Adrenal gland (tissue), 19 donors: ENCODE measurements at regions of chr3 and their contacts with region 1.

Region 1: DNA sequence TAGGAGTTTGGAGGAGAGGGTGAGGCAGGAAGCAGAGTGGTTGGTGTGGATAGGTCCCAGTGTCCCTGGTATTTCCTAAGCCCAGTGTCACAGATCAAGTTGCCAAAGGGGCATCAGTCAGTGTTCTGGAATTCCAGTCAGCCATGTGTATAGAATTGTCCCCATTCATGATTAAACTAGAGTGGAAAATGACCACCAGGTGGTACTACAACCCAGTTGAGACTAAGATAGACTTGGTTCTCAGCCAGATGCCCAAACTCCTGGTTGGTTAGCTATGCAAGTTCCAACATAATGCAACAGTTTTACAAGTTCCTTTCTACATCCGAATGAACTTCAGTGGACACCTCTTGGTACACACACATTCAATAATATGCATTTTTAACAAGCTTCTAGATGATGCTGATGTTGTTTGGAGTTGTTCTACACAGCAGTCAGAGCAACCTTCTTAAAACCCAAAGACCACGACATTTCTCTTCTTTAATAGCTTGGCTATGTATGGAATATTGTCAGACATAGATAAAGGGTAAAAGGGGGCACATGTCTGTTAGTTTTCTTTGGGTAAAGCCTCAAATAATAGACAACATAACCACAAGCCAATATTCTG is 8.4 kb upstream of the ATR start:
- DNase-seq: peak in 6 of 7 donors; percentile 25 to 65 (median 42)
- H3K4me3 ChIP-seq: no peak overlapping the region
- H3K27ac ChIP-seq: no peak overlapping the region
- H3K4me1 ChIP-seq: no peaks in the 10 kb centered on the region
- H3K27me3 ChIP-seq: no peaks in the 10 kb centered on the region
- CTCF ChIP-seq: peak; percentile 38 to 72 (median 67)
- POLR2A ChIP-seq: no peak

Region 2: GRCh38 chr3:142746646-142747045 is 159.7 kb after region 1 on chr3:
- intact Hi-C with region 1: no loop called
- DNase-seq: no peak
- H3K4me3 ChIP-seq: no peak overlapping the region
- H3K27ac ChIP-seq: no peak overlapping the region
- H3K4me1 ChIP-seq: no peaks in the 10 kb centered on the region
- H3K27me3 ChIP-seq: no peaks in the 10 kb centered on the region
- CTCF ChIP-seq: no peak
- POLR2A ChIP-seq: no peak

Region 3: DNA sequence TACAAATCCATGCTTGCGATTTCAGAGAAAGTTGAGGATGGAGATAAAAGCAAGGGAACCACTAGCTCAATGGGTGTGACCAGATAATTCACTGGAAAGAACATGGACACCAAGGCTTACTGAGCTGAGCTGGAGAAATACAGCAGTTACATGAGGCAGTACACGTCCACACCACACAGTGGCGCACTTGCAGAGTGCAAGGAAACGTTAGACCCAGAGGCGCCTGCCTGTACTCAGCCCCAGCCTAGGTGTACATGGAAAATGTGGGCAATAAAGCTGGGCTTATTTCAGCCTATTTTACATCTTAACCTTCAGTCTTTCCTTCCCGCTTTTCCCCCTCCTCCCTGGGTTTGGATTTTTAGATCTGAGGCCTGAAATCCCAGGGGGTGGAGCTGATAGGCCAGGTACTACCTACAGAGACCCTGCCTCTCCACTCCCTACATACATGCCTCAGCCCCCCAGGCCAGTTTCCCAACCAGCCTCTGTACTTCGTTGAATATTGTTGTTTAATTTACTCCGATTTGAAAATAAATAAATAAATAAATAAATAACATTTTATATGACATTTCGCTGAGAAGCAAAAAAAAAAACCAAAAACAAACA is 241.9 kb after region 1 on chr3:
- intact Hi-C with region 1: loop called in 1 of 2 experiments (anchors 10 kb)
- DNase-seq: peak; percentile 73 to 94 (median 87)
- H3K4me3 ChIP-seq: no peak overlapping the region
- H3K27ac ChIP-seq: no peak overlapping the region
- H3K4me1 ChIP-seq: no peaks in the 10 kb centered on the region
- H3K27me3 ChIP-seq: no peaks in the 10 kb centered on the region
- CTCF ChIP-seq: peak; percentile 78 to 91 (median 87)
- POLR2A ChIP-seq: no peak

Region 4: DNA sequence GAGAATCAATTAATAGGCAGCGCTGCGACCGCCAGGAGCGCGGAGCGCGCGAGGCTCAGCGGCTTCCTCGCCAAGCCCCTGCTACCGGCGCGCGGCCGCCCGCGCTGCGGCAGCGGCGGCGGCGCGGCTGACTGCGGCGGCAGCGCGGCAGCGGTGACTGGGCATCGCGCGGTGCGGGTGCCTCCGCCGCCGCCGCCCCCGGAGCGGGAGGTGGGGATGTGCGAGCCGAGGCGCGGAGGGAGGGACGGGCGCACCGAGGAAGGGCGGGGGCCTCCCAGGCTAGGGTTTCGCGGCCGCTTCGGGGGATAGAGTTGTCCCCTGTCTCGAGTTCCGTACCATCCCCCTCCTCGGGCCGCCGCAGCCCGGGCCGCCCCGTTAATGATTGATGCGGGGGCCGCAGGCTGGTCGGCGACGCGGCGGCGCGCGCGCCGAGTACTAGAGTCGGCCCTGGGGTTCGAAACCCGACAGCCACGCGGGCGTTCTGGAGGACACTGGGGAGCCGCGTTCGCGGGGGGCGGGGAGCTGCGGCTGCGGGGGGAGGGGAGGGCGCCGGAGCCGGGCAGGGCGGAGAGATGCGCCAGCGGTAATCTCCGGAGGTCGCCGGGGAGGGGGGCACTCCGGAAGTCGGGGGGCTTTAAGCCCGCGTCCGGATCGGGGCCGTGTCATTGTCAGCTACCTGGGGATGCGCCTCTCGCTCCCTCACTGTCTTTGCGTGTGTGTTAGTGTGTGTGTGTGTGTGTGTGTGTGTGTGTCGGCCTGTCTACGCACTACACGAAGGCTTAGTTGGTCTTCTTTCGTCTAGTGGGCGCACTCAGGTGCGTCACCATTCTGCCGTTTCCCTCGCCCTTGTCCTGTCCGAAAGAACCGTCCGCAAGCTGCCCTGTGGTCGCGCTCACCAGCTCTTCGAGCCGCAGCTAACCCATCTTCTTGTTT is 376.9 kb after region 1 on chr3 and contains the start of gene PAQR9:
- intact Hi-C with region 1: no loop called
- DNase-seq: peak in 2 of 7 donors; percentile 18 to 32
- H3K4me3 ChIP-seq: peak within 1 kb of the TSS in 2 of 4 donors; percentile 11 to 56
- H3K27ac ChIP-seq: no peak within 1 kb of the TSS
- H3K4me1 ChIP-seq: no peaks in the 10 kb centered on the region
- H3K27me3 ChIP-seq: peaks cover 19% of the 10 kb centered on the region
- CTCF ChIP-seq: no peak
- POLR2A ChIP-seq: no peak
- total RNA-seq, gene PAQR9: 0.13 to 3.7 (median 0.19) TPM in 5 of 9 donors, not detected in the others